ENCODE measurements at regions of chr19 and their contacts with region 1.

Region 1: DNA sequence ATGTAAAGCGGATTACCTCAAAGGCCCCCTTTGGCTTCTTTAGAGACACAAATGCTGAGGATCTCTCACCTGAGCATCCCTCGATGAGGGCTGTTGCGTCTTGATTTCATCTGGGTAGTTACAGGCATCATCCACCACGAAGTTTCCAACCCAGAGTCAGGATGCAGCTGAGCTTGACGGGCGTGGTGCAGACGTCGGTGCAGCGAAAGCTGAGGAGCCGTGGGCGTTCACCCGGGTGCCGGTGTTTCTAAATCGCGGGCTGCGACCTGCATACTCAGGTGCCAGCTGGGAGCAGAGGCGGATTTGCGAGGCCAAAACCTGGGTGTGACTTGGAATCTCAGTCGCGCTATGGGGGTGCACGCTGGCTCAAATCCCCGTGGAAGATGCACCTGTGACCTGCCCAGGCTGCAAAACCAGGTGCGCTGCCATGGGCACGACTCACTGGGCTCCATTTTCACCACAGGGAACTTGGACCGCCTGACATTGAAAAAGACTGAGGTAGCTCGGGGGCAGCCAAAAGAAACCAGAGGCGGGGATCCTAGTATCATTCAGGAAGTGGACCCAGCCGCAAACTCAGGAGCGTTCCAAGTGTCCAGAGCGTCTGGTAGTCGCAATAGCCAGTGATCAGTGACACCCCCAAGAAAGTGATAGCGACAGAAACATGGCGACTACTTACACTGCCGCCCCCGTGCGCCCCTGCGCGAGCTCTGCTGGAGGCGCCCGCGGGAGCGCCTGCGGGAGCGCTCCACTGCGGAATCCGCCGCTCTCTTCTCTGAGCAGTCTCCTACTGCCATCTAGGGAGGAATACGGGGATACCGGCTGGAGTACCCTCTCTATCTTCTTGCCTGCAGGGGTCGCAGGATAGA is 36.4 kb upstream of the IGFL4 start:
- DNase-seq: peak; percentile 81
- ATAC-seq: peak; percentile 88
- H3K4me3 ChIP-seq: peak overlapping the region; percentile 59
- H3K27ac ChIP-seq: no peak overlapping the region
- H3K4me1 ChIP-seq: peaks cover 7% of the 10 kb centered on the region; the same call in 1 of the 2 replicates
- H3K27me3 ChIP-seq: peaks cover 38% of the 10 kb centered on the region
- CTCF ChIP-seq: peak; percentile 96

Region 2: DNA sequence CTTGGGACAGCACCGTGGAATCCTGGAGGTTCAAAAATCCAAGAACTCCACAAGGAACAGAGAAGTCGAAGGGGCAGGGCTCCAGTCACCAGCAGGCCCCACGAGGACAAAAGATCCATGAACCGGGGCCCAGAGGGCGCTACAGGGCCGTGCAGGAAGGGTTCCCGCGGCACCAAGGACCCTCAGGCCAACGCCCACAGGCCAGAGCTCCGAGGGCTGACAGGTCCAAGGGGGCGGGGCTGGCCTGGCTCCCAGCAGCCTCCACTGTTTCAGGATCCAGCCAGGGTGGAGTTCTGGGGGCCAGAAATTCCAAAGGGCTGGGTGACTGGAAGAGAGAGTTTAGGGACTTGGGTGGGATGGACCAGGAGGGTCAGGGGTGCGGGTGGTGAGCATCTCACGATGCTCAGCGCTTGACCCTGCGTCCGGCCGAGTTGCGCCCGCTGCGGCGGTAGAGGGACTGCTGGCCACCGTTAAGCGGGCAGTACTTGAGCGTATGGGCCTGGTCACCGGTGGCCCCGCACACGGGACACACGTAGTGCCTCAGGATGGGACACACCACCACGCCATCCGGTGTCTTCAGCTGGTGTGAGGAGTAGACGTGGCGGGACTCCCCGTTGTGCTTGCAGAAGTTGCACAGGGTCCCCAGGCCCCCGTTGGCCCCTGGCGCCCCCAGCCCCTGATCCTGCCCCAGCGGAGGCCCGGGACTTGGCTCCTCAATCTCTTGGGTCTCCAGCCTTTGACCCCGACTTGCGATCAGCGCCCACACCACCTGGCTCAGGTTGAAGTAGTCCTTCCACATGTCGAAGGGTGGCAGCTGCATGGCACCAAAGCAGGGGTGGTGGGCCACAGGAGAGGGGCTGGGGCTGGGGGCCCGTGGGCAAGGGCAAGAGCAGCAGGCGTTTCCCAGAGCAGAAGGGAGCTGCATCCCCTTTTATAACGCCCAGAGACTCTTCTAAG is 163.0 kb before region 1 on chr19 and contains the start of gene NANOS2:
- CTCF ChIA-PET with region 1: no interaction called
- POLR2A ChIA-PET with region 1: no interaction called
- intact Hi-C with region 1: no loop called
- DNase-seq: peak; percentile 13
- ATAC-seq: no peak
- H3K4me3 ChIP-seq: no peak within 1 kb of the TSS
- H3K27ac ChIP-seq: no peak within 1 kb of the TSS
- H3K4me1 ChIP-seq: no peaks in the 10 kb centered on the region
- H3K27me3 ChIP-seq: no peaks in the 10 kb centered on the region
- CTCF ChIP-seq: peak; percentile 28; the same call in 1 of the 2 replicates
- total RNA-seq, gene NANOS2: not detected in 2 replicates

Region 3: GRCh38 chr19:45994989-45995714 is 82.0 kb before region 1 on chr19 and contains the start of gene CCDC61:
- CTCF ChIA-PET with region 1: no interaction called
- POLR2A ChIA-PET with region 1: no interaction called
- intact Hi-C with region 1: no loop called
- DNase-seq: peak; percentile 99
- ATAC-seq: peak; percentile 97
- H3K4me3 ChIP-seq: peak within 1 kb of the TSS; percentile 95
- H3K27ac ChIP-seq: no peak within 1 kb of the TSS
- H3K4me1 ChIP-seq: no peaks in the 10 kb centered on the region; the same call in 1 of the 2 replicates
- H3K27me3 ChIP-seq: no peaks in the 10 kb centered on the region
- CTCF ChIP-seq: no peak
- total RNA-seq, gene CCDC61: 6.3 and 7.7 TPM in 2 replicates

Region 4: GRCh38 chr19:46022431-46023310 is 54.5 kb before region 1 on chr19 and contains the start of gene PGLYRP1:
- CTCF ChIA-PET with region 1: interaction called, 20 read pairs
- POLR2A ChIA-PET with region 1: no interaction called
- intact Hi-C with region 1: no loop called
- DNase-seq: no peak
- ATAC-seq: no peak
- H3K4me3 ChIP-seq: no peak within 1 kb of the TSS
- H3K27ac ChIP-seq: no peak within 1 kb of the TSS
- H3K4me1 ChIP-seq: no peaks in the 10 kb centered on the region
- H3K27me3 ChIP-seq: no peaks in the 10 kb centered on the region
- CTCF ChIP-seq: no peak
- total RNA-seq, gene PGLYRP1: not detected in 2 replicates

Region 5: GRCh38 chr19:46030812-46031550 is 46.2 kb before region 1 on chr19:
- CTCF ChIA-PET with region 1: interaction called, 20 read pairs
- POLR2A ChIA-PET with region 1: no interaction called
- intact Hi-C with region 1: loop called (anchors 1 kb)
- DNase-seq: no peak
- ATAC-seq: no peak
- H3K4me3 ChIP-seq: no peak overlapping the region
- H3K27ac ChIP-seq: no peak overlapping the region
- H3K4me1 ChIP-seq: no peaks in the 10 kb centered on the region
- H3K27me3 ChIP-seq: no peaks in the 10 kb centered on the region
- CTCF ChIP-seq: no peak

Region 6: GRCh38 chr19:46052896-46053295 is 24.3 kb before region 1 on chr19:
- CTCF ChIA-PET with region 1: interaction called, 10 read pairs
- POLR2A ChIA-PET with region 1: no interaction called
- intact Hi-C with region 1: no loop called
- DNase-seq: no peak
- ATAC-seq: no peak
- H3K4me3 ChIP-seq: no peak overlapping the region
- H3K27ac ChIP-seq: no peak overlapping the region
- H3K4me1 ChIP-seq: no peaks in the 10 kb centered on the region
- H3K27me3 ChIP-seq: peaks cover 20% of the 10 kb centered on the region; the same call in 1 of the 2 replicates
- CTCF ChIP-seq: no peak

Region 7: DNA sequence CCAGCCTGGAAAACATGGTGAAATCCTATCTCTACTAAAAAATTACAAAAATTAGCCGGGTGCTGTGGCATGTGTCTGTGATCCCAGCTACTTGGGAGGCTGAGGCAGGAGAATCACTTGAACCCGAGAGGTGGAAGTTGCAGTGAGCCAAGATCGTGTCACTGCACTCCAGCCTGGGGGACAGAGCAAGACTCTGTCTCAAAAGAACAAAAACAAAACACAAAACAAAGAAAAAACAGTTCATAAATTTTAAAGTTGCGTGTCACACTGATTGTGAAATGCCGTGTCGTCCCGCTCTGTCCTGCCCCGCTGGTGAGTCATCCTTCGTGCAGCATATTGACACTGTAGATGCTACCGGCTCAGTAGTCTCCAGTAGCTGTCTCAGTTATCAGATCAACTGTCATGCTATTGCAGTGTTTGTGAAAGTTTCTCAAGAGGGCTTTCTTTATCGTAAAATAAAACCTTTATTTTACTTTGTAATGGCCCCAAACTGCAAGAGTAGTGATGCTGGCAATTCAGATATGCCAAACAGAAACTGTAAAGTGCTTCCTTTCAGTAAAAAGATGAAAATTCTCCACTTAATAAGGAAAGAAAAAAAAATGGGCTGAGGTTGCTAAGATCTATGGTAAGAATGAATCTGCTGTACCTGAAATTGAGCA is 115.9 kb after region 1 on chr19:
- CTCF ChIA-PET with region 1: interaction called, 13 read pairs
- POLR2A ChIA-PET with region 1: no interaction called
- intact Hi-C with region 1: loop called (anchors 1 kb)
- DNase-seq: peak; percentile 82
- ATAC-seq: peak; percentile 87
- H3K4me3 ChIP-seq: 0 out of 2 replicates have a peak overlapping the region, but pooled peaks have one; percentile 27
- H3K27ac ChIP-seq: no peak overlapping the region
- H3K4me1 ChIP-seq: peaks cover 12% of the 10 kb centered on the region
- H3K27me3 ChIP-seq: peaks cover 12% of the 10 kb centered on the region
- CTCF ChIP-seq: no peak

Region 8: DNA sequence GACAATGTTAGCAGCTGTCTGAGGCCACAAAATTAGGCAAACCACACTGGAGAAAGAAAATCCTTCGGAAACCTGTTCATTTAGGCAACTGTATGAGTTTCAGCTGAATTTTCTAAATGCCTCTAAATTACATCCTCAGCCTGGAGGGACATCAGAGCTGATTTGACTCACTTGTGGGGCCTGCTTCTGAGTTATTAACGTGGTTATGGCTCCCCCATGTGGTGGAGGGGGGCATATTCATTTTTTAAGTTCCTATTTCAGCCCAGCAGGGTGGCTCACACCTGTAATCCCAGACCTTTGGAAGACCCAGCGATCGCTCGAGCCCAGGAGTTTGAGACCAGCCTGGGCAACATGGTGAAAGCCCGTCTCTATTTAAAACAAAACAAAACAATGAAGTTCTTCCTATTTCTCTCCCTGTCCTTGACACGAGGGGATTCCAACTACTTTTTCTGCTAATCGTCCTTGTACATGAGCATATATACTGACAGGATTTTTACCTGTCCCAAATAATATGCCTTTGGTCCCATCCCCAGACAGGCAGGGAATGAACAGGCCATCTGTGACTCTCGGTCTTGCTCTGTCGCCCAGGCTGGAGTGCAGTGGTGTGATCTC is 188.1 kb after region 1 on chr19:
- CTCF ChIA-PET with region 1: interaction called, 5 read pairs
- POLR2A ChIA-PET with region 1: no interaction called
- intact Hi-C with region 1: loop called (anchors 1 kb)
- DNase-seq: peak; percentile 75
- ATAC-seq: peak; percentile 83
- H3K4me3 ChIP-seq: no peak overlapping the region
- H3K27ac ChIP-seq: no peak overlapping the region
- H3K4me1 ChIP-seq: peaks cover 8% of the 10 kb centered on the region
- H3K27me3 ChIP-seq: no peaks in the 10 kb centered on the region
- CTCF ChIP-seq: peak; percentile 77